ENCODE measurements at regions of chr18 and their contacts with region 1.

Region 1: GRCh38 chr18:10860928-10861327 is 288.4 kb downstream of the PIEZO2 start:
- DNase-seq: no peak
- ATAC-seq: no peak
- H3K4me3 ChIP-seq: no peak overlapping the region
- H3K27ac ChIP-seq: no peak overlapping the region
- H3K4me1 ChIP-seq: no peaks in the 10 kb centered on the region
- H3K27me3 ChIP-seq: no peaks in the 10 kb centered on the region

Region 2: GRCh38 chr18:10928772-10929373 is 67.9 kb after region 1 on chr18:
- intact Hi-C with region 1: loop called in 1 of 2 experiments (anchors 10 kb)
- DNase-seq: no peak
- ATAC-seq: no peak
- H3K4me3 ChIP-seq: no peak overlapping the region
- H3K27ac ChIP-seq: no peak overlapping the region
- H3K4me1 ChIP-seq: no peaks in the 10 kb centered on the region
- H3K27me3 ChIP-seq: no peaks in the 10 kb centered on the region

Region 3: GRCh38 chr18:10953672-10954071 is 92.7 kb after region 1 on chr18:
- intact Hi-C with region 1: no loop called
- DNase-seq: no peak
- ATAC-seq: no peak
- H3K4me3 ChIP-seq: no peak overlapping the region
- H3K27ac ChIP-seq: no peak overlapping the region
- H3K4me1 ChIP-seq: no peaks in the 10 kb centered on the region
- H3K27me3 ChIP-seq: no peaks in the 10 kb centered on the region